GM12878 (cell line): ENCODE measurements at regions of chr9 and their contacts with region 1.

Region 1: GRCh38 chr9:110058304-110058953 is 149.5 kb downstream of the C9orf152 start:
- DNase-seq: no peak
- ATAC-seq: peak; percentile 83
- H3K4me3 ChIP-seq: peak overlapping the region; percentile 30; the same call in 1 of the 2 replicates
- H3K27ac ChIP-seq: no peak overlapping the region; the same call in 1 of the 2 replicates
- H3K4me1 ChIP-seq: peaks cover 19% of the 10 kb centered on the region
- H3K27me3 ChIP-seq: no peaks in the 10 kb centered on the region
- CTCF ChIP-seq: peak; percentile 63 to 74 (median 72)
- EP300 ChIP-seq: no peak
- POLR2A ChIP-seq: no peak
- RAD21 ChIP-seq: peak; percentile 98

Region 2: DNA sequence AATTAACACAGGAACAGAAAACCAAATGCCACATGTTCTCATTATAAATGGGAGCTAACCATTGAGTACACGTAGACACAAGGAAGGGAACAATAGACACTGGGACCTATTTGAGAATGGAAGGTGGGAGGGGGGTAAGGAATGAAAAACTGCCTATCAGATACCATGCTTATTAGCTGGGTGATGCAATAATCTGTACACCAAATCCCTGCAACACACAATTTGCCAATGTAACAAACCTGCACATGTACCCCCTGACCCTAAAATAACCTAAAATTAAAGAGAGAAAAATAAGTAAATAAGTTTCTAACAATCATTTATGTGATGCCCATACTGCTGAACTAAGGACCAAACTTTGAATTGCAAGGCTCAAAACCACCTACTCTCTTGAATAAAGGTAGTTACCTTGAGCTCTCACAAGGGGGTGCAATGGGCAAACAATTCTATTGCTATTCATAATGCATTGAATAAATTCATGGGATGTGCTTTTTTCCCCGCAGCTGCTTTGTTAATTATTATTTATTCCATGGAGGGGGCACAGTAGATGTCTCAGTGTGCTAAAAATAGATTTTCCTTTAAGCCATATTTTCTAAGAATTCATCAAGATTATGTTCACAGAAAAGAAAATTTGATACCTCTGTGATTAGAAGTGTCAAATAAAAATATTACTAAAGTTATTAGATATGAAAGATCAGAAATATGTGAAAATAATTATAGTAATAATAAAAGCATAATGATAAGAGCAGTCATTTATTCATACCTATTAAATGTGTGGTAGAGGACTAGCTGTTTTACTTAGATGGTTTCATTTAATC is 484.2 kb before region 1 on chr9:
- CTCF ChIA-PET with region 1: no interaction called
- POLR2A ChIA-PET with region 1: no interaction called
- RAD21 ChIA-PET with region 1: no interaction called
- SMC1A ChIA-PET with region 1: no interaction called
- in situ Hi-C with region 1: no loop called
- intact Hi-C with region 1: loop called (anchors 5 kb)
- DNase-seq: peak; percentile 5
- ATAC-seq: peak; percentile 80
- H3K4me3 ChIP-seq: no peak overlapping the region
- H3K27ac ChIP-seq: no peak overlapping the region
- H3K4me1 ChIP-seq: no peaks in the 10 kb centered on the region
- H3K27me3 ChIP-seq: no peaks in the 10 kb centered on the region
- CTCF ChIP-seq: peak; percentile 58 to 67 (median 58); a peak in 5 of 6 replicates
- EP300 ChIP-seq: no peak
- POLR2A ChIP-seq: no peak
- RAD21 ChIP-seq: peak; percentile 85

Region 3: GRCh38 chr9:109859433-109859832 is 199.0 kb before region 1 on chr9:
- CTCF ChIA-PET with region 1: no interaction called
- POLR2A ChIA-PET with region 1: no interaction called
- RAD21 ChIA-PET with region 1: no interaction called
- SMC1A ChIA-PET with region 1: no interaction called
- in situ Hi-C with region 1: no loop called
- intact Hi-C with region 1: no loop called
- DNase-seq: no peak
- ATAC-seq: no peak
- H3K4me3 ChIP-seq: no peak overlapping the region
- H3K27ac ChIP-seq: no peak overlapping the region
- H3K4me1 ChIP-seq: no peaks in the 10 kb centered on the region
- H3K27me3 ChIP-seq: peaks cover 3% of the 10 kb centered on the region in 2 experiments
- CTCF ChIP-seq: peak in 1 of 3 experiments; percentile 34; a peak in 3 of 6 replicates
- EP300 ChIP-seq: no peak
- POLR2A ChIP-seq: no peak
- RAD21 ChIP-seq: no peak

Region 4: GRCh38 chr9:110069326-110070248 is 11.2 kb after region 1 on chr9:
- CTCF ChIA-PET with region 1: interaction called, 10 read pairs
- POLR2A ChIA-PET with region 1: interaction called, 5 read pairs
- RAD21 ChIA-PET with region 1: no interaction called
- SMC1A ChIA-PET with region 1: interaction called, 8 read pairs
- in situ Hi-C with region 1: no loop called
- intact Hi-C with region 1: no loop called
- DNase-seq: no peak
- ATAC-seq: no peak
- H3K4me3 ChIP-seq: no peak overlapping the region
- H3K27ac ChIP-seq: no peak overlapping the region
- H3K4me1 ChIP-seq: peaks cover 29% of the 10 kb centered on the region
- H3K27me3 ChIP-seq: no peaks in the 10 kb centered on the region
- CTCF ChIP-seq: no peak
- EP300 ChIP-seq: no peak
- POLR2A ChIP-seq: no peak
- RAD21 ChIP-seq: no peak

Region 5: DNA sequence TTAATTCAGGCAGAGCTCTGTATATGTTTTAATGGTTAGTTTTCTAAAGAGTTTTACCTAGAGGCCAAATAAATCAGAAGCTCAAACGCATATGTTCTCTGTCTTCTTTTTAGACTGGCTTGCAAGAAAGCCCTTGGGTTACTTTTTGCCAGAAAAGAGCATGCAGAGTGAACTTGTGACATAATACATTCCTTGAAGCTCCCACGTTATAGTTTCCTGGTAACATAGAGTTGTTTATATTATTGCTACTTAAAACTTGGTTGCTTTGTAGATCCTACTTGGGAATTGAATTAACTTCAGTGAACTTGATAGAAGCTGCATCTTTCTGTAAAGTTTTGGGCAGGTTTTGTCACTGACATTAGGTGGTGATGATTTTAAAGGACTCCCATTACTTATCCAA is 46.7 kb after region 1 on chr9:
- CTCF ChIA-PET with region 1: interaction called, 8 read pairs
- POLR2A ChIA-PET with region 1: interaction called, 7 read pairs
- RAD21 ChIA-PET with region 1: interaction called, 14 read pairs
- SMC1A ChIA-PET with region 1: interaction called, 10 read pairs
- in situ Hi-C with region 1: no loop called
- intact Hi-C with region 1: loop called (anchors 5 kb)
- DNase-seq: no peak
- ATAC-seq: no peak
- H3K4me3 ChIP-seq: no peak overlapping the region
- H3K27ac ChIP-seq: no peak overlapping the region
- H3K4me1 ChIP-seq: peaks cover 58% of the 10 kb centered on the region
- H3K27me3 ChIP-seq: no peaks in the 10 kb centered on the region
- CTCF ChIP-seq: no peak
- EP300 ChIP-seq: no peak
- POLR2A ChIP-seq: no peak
- RAD21 ChIP-seq: no peak

Region 6: DNA sequence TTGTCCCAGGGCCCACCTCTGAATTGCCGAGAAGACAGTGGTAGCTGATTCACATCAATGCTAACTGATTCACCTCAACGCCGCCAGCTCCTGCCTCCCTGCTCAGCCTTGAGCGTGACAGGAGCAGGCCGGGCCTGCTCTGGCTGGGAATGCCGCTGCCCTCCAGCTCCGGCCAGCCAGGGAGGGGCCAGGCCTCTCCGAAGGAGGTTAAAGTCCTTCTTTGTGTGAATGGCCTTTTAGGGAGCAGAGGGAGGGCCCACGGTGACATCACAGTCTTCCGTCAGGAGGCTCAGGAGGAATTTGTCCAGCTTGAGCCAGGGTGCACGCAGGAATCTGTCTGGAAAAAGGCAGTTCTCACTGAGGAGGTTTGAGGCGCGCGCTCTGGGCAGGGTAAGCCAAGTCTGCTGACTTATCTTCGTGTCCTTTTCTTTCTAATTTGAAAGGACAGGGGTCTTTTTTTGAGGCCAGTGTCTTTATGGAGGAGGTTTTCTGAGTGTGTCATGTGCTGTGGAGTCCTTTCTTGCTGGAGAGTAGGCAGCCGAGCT is 66.8 kb after region 1 on chr9:
- CTCF ChIA-PET with region 1: interaction called, 6 read pairs
- POLR2A ChIA-PET with region 1: interaction called, 3 read pairs
- RAD21 ChIA-PET with region 1: interaction called, 9 read pairs
- SMC1A ChIA-PET with region 1: interaction called, 76 read pairs
- in situ Hi-C with region 1: no loop called
- intact Hi-C with region 1: no loop called
- DNase-seq: no peak
- ATAC-seq: no peak
- H3K4me3 ChIP-seq: no peak overlapping the region
- H3K27ac ChIP-seq: peak overlapping the region; percentile 29
- H3K4me1 ChIP-seq: peaks cover 58% of the 10 kb centered on the region
- H3K27me3 ChIP-seq: no peaks in the 10 kb centered on the region
- CTCF ChIP-seq: no peak
- EP300 ChIP-seq: no peak
- POLR2A ChIP-seq: no peak
- RAD21 ChIP-seq: no peak

Region 7: DNA sequence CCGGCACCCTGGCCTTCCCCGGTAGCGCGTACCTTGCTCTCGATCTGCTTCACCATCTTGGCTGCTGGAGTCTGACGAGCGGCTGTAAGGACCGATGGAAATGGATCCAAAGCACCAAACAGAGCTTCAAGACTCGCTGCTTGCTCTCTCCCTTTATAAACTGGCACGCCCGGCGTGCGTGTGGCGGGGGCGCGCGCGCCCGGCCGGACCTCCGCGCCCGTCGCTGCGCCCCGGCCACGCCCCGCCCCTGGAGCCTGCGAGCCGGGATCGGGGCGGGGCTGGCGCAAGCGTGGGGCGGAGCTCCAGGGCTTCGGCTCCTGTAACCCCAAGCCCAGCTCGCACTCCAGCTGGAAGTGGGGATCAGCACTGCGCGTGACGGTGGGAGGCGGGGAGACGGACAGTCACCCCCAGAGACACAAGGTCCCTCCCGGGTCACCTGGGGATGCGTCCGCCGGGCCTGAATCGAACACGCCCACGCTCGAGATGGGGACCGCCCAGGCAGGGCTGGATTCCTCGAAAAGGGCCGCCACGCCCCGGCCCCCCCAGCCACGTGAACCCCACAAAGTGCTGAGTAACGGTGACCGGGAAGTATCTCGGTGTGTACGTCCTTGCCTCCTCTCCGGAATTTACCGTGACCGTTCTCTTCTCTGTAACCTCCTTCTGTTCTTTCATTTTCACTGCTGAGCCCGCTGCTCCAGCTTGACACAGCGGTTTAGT is 198.1 kb after region 1 on chr9 and contains the start of gene TXN:
- CTCF ChIA-PET with region 1: no interaction called
- POLR2A ChIA-PET with region 1: no interaction called
- RAD21 ChIA-PET with region 1: interaction called, 3 read pairs
- SMC1A ChIA-PET with region 1: no interaction called
- in situ Hi-C with region 1: no loop called
- intact Hi-C with region 1: loop called (anchors 10 kb)
- DNase-seq: peak; percentile 87
- ATAC-seq: peak; percentile 69
- H3K4me3 ChIP-seq: peak within 1 kb of the TSS; percentile 92
- H3K27ac ChIP-seq: peak within 1 kb of the TSS; percentile 91
- H3K4me1 ChIP-seq: peaks cover 24% of the 10 kb centered on the region
- H3K27me3 ChIP-seq: no peaks in the 10 kb centered on the region
- CTCF ChIP-seq: no peak
- EP300 ChIP-seq: peak; percentile 41 to 47; a peak in 1 of 4 replicates
- POLR2A ChIP-seq: peak; percentile 99
- RAD21 ChIP-seq: no peak
- polyA plus RNA-seq, gene TXN: 2,263 to 2,304 TPM